Left colon (tissue), 2 donors: ENCODE measurements at regions of chr3 and their contacts with region 1.

Region 1: GRCh38 chr3:15241341-15241740 is 35.3 kb downstream of the CAPN7 start:
- DNase-seq: peak in 1 of 2 donors; percentile 35
- ATAC-seq: no peak

Region 2: GRCh38 chr3:15572138-15572537 is 330.8 kb after region 1 on chr3:
- intact Hi-C with region 1: loop called in 1 of 2 experiments (anchors 5 kb)
- DNase-seq: no peak
- ATAC-seq: no peak